ENCODE measurements at regions of chr5 and their contacts with region 1.

Region 1: GRCh38 chr5:141326088-141326854 is 4.0 kb upstream of the PCDHGA1 start:
- DNase-seq: peak; percentile 62
- CTCF ChIP-seq: peak; percentile 43

Region 2: GRCh38 chr5:141172378-141173204 is 153.7 kb before region 1 on chr5 and contains the start of gene PCDHB7:
- CTCF ChIA-PET with region 1: no interaction called
- POLR2A ChIA-PET with region 1: no interaction called
- DNase-seq: no peak
- CTCF ChIP-seq: peak; percentile 12

Region 3: DNA sequence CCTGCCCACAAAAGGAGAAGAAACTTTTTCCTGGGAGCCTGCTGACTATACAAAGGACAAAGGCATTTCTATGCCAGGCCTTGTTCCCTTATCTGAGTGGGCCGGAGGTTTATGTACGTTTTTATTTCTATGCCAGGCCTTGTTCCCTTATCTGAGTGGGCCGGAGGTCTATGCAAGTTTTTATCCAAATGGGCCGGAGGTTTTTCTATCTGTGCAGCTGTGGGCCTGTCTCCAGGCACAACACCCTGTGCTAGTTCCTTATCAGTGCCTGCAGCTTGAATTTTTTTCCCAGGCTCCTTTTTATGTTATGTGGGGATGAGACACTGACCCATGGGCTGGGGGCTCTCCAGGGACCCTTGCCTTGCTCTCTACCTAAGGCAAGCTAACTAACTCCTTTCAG is 27.9 kb before region 1 on chr5:
- CTCF ChIA-PET with region 1: no interaction called
- POLR2A ChIA-PET with region 1: no interaction called
- DNase-seq: no peak
- CTCF ChIP-seq: no peak

Region 4: DNA sequence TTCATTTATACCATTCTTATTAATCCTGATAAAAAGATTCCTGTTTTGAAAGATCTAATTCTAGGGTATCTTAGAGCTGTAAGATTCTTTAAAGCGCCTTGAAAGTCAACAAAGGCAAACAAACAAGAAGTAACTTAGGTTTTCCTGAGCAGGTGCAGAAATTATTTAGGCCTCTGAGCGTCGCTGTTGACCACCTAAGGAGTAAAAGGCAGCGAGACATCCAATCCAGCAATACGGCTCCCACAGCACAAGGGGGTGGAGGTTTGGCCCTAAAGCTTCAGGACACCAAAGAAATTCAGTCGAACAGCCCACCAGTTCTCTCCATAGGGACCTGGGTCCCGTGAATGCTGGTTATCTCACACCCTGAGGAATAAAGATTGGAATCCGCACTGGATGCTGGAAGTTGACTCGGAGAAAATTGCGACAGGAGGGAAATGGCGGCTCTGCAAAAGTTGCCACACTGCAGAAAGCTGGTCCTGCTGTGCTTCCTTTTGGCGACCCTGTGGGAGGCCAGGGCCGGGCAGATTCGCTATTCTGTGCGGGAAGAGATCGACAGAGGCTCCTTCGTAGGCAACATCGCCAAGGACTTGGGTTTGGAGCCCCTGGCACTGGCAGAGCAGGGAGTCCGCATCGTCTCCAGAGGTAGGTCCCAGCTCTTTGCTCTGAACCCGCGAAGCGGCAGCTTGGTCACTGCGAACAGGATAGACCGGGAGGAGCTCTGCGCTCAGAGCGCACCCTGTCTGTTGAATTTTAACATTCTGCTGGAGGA is 12.5 kb after region 1 on chr5 and contains the start of gene PCDHGA2:
- CTCF ChIA-PET with region 1: interaction called, 14 read pairs
- POLR2A ChIA-PET with region 1: no interaction called
- DNase-seq: peak; percentile 47
- CTCF ChIP-seq: peak; percentile 35

Region 5: DNA sequence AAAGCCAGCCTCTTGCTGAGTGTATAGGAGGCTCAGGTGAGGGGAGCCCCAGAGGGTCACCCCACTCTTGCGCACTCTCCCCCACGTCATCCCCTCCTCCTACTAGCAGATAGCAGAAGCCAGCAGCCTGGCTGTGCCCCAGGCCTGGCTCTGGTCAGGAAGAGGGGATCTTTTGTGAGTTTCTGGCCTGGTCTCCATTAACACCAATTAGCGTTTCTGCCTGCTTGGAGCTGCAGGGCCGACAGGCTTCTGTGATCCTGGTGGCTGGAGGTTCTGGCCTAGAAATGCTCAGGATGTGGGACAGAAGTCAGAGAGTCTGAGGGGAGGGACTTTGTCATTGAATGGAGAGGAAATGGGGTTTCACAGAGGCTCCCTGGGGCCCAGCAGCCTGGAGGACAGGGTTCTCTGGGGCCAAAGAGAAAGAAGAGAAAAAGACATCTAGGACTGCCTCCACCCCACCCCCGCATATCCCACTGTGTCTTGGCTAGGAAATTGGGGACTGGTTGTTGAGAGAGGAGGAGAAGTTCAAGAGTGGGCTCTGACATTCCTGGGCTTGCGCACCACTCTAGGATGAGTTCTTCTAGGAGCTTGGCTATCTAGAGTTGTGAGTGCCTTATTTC is 403.2 kb after region 1 on chr5:
- CTCF ChIA-PET with region 1: no interaction called
- POLR2A ChIA-PET with region 1: no interaction called
- DNase-seq: no peak
- CTCF ChIP-seq: no peak

Region 6: DNA sequence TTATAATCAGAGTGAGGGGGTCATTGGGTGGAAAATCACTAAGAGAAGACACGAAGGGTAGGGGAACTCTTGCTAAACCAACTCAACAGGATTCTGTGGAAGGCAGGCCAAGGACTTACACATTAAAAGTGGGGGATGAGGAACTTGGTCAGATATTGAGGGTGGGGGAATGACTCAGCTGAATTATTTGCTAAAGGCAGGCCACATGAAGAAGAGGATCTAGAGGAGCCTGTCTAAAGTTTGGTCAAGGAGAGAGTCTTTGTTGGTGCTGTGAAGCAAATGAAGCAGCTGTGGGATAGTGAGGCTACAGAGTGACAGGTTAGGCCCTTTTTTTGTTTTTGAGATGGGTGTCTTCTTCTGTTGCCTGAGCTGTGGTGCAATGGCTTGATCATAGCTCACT is 1062.4 kb after region 1 on chr5:
- CTCF ChIA-PET with region 1: no interaction called
- POLR2A ChIA-PET with region 1: no interaction called
- DNase-seq: no peak
- CTCF ChIP-seq: no peak

Measured in GM10248 (cell line).